ENCODE measurements at regions of chr2 and their contacts with region 1.

Region 1: DNA sequence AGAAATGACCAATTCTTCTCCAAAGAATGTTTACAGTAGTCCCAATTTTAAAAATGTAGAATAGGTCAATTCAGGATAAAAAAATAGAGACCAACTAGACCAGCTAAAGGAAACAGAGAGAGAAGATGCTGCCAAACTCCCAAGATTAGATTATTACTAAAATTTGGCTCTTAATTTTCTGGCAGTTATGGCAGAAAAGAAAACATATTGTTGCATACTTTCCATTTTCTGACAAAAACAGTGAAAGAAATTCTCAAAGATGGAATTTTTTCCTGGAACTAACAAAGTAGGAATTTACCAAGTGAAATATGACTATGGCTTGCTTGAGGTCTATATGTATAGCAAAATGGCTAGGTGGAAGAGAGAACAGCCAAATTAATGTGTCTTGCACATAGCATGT is 138.3 kb upstream of the STK17B start:
- H3K4me3 Mint-ChIP-seq: no peak overlapping the region
- H3K27ac Mint-ChIP-seq: no peak overlapping the region
- H3K4me1 Mint-ChIP-seq: no peaks in the 10 kb centered on the region
- H3K27me3 Mint-ChIP-seq: peaks cover 1% of the 10 kb centered on the region

Region 2: GRCh38 chr2:196399722-196400691 is 90.3 kb after region 1 on chr2:
- intact Hi-C with region 1: no loop called
- H3K4me3 Mint-ChIP-seq: no peak overlapping the region
- H3K27ac Mint-ChIP-seq: no peak overlapping the region
- H3K4me1 Mint-ChIP-seq: peaks cover 12% of the 10 kb centered on the region
- H3K27me3 Mint-ChIP-seq: no peaks in the 10 kb centered on the region

Region 3: GRCh38 chr2:196639180-196640030 is 329.7 kb after region 1 on chr2 and contains the start of gene CCDC150:
- intact Hi-C with region 1: loop called (anchors 10 kb)
- H3K4me3 Mint-ChIP-seq: peak within 1 kb of the TSS; percentile 83
- H3K27ac Mint-ChIP-seq: peak within 1 kb of the TSS; percentile 72
- H3K4me1 Mint-ChIP-seq: peaks cover 13% of the 10 kb centered on the region
- H3K27me3 Mint-ChIP-seq: peaks cover 6% of the 10 kb centered on the region